HAP-1 (cell line): ENCODE measurements at regions of chr18 and their contacts with region 1.

Region 1: GRCh38 chr18:43789234-43790000 is 512.1 kb upstream of the SYT4 start:
- DNase-seq: no peak
- H3K4me3 ChIP-seq: no peak overlapping the region
- H3K4me1 ChIP-seq: no peaks in the 10 kb centered on the region
- H3K27me3 ChIP-seq: no peaks in the 10 kb centered on the region

Region 2: GRCh38 chr18:43486462-43486861 is 303.0 kb before region 1 on chr18:
- in situ Hi-C with region 1: no loop called
- DNase-seq: no peak
- H3K4me3 ChIP-seq: no peak overlapping the region
- H3K4me1 ChIP-seq: no peaks in the 10 kb centered on the region
- H3K27me3 ChIP-seq: no peaks in the 10 kb centered on the region

Region 3: DNA sequence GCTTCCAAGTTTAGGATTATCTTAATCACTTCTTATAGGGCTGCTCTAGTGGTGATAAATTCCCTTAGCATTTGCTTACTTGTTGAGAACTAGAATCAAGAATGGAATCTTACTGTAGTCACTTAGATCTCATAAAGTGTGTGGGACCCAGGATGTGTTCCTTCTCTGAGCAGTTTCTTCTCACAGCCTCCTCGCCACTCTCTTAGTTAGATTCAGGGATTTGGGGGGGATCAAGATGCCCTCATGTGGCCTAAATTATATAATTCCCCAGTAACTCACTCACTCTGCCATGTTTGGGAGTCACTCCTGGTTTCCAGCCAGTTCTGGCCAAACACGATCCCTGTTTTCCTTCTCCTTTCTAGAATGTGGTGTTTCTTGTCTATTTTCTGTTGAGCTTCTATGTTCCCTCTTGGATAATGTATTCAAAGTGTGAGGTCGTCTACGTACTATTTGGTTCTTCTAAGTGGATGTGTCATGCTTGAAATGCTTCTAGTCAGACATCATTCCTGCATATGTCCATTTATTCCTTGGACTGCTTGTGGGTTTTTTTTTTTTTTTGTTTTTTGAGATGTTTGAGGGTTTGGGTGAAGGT is 97.2 kb before region 1 on chr18:
- in situ Hi-C with region 1: loop called (anchors 25 kb)
- DNase-seq: no peak
- H3K4me3 ChIP-seq: no peak overlapping the region
- H3K4me1 ChIP-seq: no peaks in the 10 kb centered on the region
- H3K27me3 ChIP-seq: no peaks in the 10 kb centered on the region